ENCODE measurements at regions of chr1 and their contacts with region 1.

Region 1: GRCh38 chr1:31705080-31705866 is 1.5 kb upstream of the COL16A1 start:
- DNase-seq: peak; percentile 58
- H3K27ac ChIP-seq: peak overlapping the region; percentile 99
- CTCF ChIP-seq: peak; percentile 59

Region 2: GRCh38 chr1:31663622-31664452 is 41.4 kb before region 1 on chr1:
- CTCF ChIA-PET with region 1: interaction called, 11 read pairs
- POLR2A ChIA-PET with region 1: no interaction called
- DNase-seq: peak; percentile 59
- H3K27ac ChIP-seq: peak overlapping the region; percentile 97
- CTCF ChIP-seq: peak; percentile 82

Region 3: GRCh38 chr1:31715087-31715872 is 10.0 kb after region 1 on chr1:
- CTCF ChIA-PET with region 1: interaction called, 23 read pairs
- POLR2A ChIA-PET with region 1: no interaction called
- DNase-seq: peak; percentile 66
- H3K27ac ChIP-seq: no peak overlapping the region; the same call in 1 of the 2 replicates
- CTCF ChIP-seq: peak; percentile 81

Measured in RWPE1 (cell line).